MCF 10A (cell line): ENCODE measurements at regions of chr2 and their contacts with region 1.

Region 1: GRCh38 chr2:168375195-168375798 is 80.8 kb upstream of the CERS6 start:
- DNase-seq: peak; percentile 23
- H3K4me3 Mint-ChIP-seq: no peak overlapping the region
- H3K27ac Mint-ChIP-seq: no peak overlapping the region
- H3K4me1 Mint-ChIP-seq: no peaks in the 10 kb centered on the region
- H3K27me3 Mint-ChIP-seq: no peaks in the 10 kb centered on the region
- CTCF ChIP-seq: peak; percentile 25

Region 2: GRCh38 chr2:167987558-167987957 is 387.7 kb before region 1 on chr2:
- CTCF ChIA-PET with region 1: no interaction called
- POLR2A ChIA-PET with region 1: no interaction called
- intact Hi-C with region 1: no loop called
- DNase-seq: no peak
- H3K4me3 Mint-ChIP-seq: no peak overlapping the region
- H3K27ac Mint-ChIP-seq: no peak overlapping the region
- H3K4me1 Mint-ChIP-seq: no peaks in the 10 kb centered on the region
- H3K27me3 Mint-ChIP-seq: no peaks in the 10 kb centered on the region
- CTCF ChIP-seq: no peak

Region 3: GRCh38 chr2:168687314-168687713 is 312.0 kb after region 1 on chr2:
- CTCF ChIA-PET with region 1: interaction called, 13 read pairs
- POLR2A ChIA-PET with region 1: no interaction called
- intact Hi-C with region 1: loop called (anchors 5 kb)
- DNase-seq: peak; percentile 34
- H3K4me3 Mint-ChIP-seq: no peak overlapping the region
- H3K27ac Mint-ChIP-seq: no peak overlapping the region
- H3K4me1 Mint-ChIP-seq: peaks cover 10% of the 10 kb centered on the region
- H3K27me3 Mint-ChIP-seq: no peaks in the 10 kb centered on the region
- CTCF ChIP-seq: peak; percentile 13

Region 4: GRCh38 chr2:168705534-168706470 is 330.5 kb after region 1 on chr2:
- CTCF ChIA-PET with region 1: interaction called, 4 read pairs
- POLR2A ChIA-PET with region 1: no interaction called
- intact Hi-C with region 1: loop called (anchors 1 kb)
- DNase-seq: peak; percentile 43
- H3K4me3 Mint-ChIP-seq: no peak overlapping the region
- H3K27ac Mint-ChIP-seq: peak overlapping the region; percentile 33
- H3K4me1 Mint-ChIP-seq: peaks cover 6% of the 10 kb centered on the region
- H3K27me3 Mint-ChIP-seq: no peaks in the 10 kb centered on the region
- CTCF ChIP-seq: peak; percentile 33